Left ventricle myocardium superior (tissue), 1 donor: ENCODE measurements at regions of chr11 and their contacts with region 1.

Region 1: GRCh38 chr11:12043959-12044819 is 35.8 kb upstream of the DKK3 start:
- DNase-seq: peak; percentile 86
- ATAC-seq: peak; percentile 86

Region 2: GRCh38 chr11:11798586-11799438 is 245.4 kb before region 1 on chr11:
- intact Hi-C with region 1: loop called (anchors 2 kb)
- DNase-seq: peak; percentile 92
- ATAC-seq: peak; percentile 94

Region 3: GRCh38 chr11:11931461-11932055 is 112.6 kb before region 1 on chr11:
- intact Hi-C with region 1: loop called (anchors 5 kb)
- DNase-seq: no peak
- ATAC-seq: peak; percentile 70

Region 4: DNA sequence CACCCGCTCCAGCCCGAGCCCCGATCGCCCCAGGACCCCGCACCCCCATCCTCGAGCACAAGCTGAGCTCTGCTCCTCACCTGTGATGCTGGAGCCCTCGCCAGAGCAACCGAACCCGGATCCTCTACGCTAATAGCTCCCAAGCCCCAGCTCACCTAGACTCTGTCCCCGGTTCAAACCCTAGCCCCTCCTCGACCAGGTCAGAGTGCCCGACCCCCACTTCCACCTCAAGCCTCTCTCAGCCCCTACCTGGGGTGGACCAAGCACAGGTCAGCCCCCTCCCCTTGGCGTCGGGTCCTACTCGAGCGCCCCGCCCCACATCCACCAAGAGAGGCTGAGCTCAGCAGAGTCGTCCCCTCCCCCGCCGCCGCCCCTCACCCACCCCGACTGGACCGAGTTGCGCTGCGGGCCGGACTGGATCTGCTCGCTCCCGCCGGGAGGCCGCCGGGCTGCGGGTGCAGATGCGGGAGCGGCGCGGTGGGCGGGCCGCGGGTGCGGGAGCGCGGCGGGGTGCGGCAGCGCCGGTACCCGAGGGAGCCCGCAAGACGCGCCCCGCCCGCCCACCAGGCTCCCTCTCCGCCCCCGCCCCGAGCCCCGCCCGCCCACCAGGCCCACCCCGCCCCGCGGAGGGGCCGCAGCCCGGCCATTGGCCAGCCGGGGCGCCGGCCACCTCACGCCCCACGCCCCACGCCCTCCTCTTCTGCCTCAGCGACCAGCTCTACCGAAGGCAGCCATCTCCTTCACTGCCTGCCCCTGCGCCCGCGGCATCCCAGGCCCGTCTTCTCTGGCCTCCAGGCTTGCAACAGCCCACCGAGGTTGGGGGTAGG is 35.2 kb before region 1 on chr11:
- intact Hi-C with region 1: no loop called
- DNase-seq: peak; percentile 83
- ATAC-seq: peak; percentile 83

Region 5: GRCh38 chr11:12182676-12183541 is 138.7 kb after region 1 on chr11:
- intact Hi-C with region 1: no loop called
- DNase-seq: peak; percentile 71
- ATAC-seq: peak; percentile 75

Region 6: GRCh38 chr11:12281571-12282478 is 237.6 kb after region 1 on chr11:
- intact Hi-C with region 1: loop called (anchors 1 kb)
- DNase-seq: peak; percentile 86
- ATAC-seq: peak; percentile 68